Endothelial cell of umbilical vein (primary cell): ENCODE measurements at regions of chr1 and their contacts with region 1.

Region 1: DNA sequence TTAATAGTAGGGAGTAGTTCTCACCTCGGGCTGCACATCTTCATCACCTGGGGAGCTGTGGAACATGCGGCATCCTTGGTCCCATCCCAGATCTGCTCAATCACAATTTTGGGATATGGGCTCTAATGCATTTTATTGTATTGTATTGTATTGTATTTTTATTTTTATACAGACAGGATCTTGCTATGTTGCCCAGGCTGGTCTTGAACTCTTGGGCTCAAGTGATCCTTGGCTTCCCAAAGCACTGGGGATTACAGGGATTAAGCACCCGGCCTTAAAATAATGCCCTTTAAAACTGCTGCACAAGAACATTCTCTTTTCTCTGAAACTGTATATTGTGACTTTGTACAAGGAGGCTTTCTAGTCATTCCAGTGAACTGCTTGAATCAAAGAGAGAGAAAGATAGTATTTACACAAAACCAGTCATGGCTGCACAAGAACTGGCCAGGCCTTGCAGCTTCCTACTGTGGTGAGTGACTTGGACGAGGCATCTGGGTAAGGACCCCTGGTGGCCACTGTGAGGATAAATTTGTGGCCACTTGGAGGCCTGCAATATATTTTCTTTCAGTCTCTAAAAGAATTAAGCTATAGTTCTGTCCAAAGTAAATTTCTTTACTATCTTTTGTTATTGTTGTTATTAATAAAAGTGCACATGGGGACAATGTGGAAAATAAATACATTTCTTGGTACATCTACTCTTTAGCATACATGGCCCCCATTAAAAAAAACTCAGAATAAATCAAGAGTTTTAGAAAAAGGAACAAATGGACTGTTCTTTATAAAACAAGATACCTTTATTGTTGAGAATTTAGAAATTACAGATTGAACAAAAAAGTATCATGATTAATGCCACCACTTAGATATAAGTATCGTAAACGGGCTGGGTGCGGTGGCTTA is 48.0 kb downstream of the TBCE start:
- DNase-seq: peak; percentile 70
- H3K4me3 ChIP-seq: no peak overlapping the region
- H3K27ac ChIP-seq: no peak overlapping the region
- H3K4me1 ChIP-seq: no peaks in the 10 kb centered on the region
- H3K27me3 ChIP-seq: no peaks in the 10 kb centered on the region
- CTCF ChIP-seq: peak; percentile 71 to 80
- POLR2A ChIP-seq: no peak

Region 2: DNA sequence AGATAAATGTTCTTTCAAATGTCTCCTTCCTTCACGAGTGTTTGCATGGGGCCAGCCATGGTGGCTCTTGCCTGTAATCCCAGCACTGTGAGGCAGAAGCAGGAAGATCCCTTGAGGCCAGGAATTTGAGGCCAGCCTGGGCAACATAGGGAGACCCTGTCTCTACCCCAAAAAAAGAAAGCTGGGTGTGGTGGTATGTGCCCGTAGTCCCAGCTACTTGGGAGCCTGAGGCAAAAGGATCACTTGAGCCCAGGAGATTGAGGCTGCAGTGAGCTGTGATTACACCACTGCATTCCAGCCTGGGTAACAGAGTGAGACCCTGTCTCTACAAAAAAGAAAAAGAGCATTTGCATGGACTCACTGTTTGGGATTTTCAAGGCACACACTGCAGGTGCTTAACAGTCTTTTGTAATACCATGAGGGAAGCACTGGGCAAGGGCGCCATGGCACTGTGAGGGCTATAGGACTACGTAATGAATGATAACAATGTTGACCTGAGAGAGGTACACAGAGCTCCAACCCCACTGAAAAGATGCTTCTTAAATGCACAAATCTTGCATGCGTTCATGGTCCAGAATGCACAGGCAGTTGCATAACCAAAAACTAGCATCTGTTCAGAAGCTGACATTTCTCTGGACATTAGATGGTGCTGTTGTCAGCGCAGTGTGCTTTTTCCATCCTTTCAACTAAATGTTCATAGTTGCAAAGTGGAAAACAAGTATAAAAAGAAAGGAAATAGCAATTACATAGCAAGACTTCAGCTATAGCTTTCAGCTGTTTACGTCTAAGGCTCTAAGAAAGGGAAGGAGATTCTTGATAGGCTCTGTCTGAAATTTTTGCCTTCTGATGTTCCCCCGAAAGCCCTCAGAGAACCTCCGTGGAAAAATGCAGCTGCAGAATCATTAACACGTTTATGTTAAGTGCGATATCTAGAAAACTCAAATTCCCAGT is 928.5 kb before region 1 on chr1:
- CTCF ChIA-PET with region 1: interaction called, 42 read pairs
- POLR2A ChIA-PET with region 1: no interaction called
- dilution Hi-C with region 1: no loop called
- intact Hi-C with region 1: loop called (anchors 1 kb)
- DNase-seq: peak; percentile 84
- H3K4me3 ChIP-seq: no peak overlapping the region
- H3K27ac ChIP-seq: no peak overlapping the region
- H3K4me1 ChIP-seq: peaks cover 7% of the 10 kb centered on the region
- H3K27me3 ChIP-seq: peaks cover 10 to 12% of the 10 kb centered on the region in 2 experiments
- CTCF ChIP-seq: peak; percentile 54 to 55
- POLR2A ChIP-seq: no peak

Region 3: DNA sequence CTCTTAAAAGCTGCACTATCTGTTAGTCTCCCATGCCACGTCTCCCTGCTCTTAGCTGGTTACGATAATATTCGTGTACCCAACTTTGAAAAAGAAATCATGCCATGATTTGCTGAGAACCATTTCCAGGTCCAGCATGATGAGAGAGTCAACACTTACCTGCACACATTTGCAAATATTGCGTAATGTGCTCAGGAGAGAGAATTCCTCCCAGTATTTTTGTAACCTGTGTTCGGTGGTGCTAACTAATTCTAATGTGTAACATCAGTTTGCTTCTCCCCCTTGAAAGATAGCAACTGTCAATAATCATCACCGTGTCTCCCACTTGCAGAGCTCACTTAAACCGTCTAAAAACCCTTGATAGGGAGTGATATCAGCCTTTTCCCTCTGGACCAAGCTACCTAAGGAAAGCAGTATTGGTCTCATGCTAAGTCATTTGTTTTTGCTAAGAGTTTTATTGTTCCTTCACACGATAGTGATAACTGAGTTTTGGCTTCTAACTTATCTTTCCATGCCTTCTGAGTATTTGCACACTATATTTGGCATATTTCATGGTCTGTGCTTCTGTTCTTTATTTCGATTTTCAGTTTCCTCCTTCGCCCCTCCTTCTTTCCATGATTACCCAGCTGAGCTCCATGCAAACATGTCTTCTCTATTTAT is 744.2 kb before region 1 on chr1:
- CTCF ChIA-PET with region 1: no interaction called
- POLR2A ChIA-PET with region 1: no interaction called
- dilution Hi-C with region 1: no loop called
- intact Hi-C with region 1: no loop called
- DNase-seq: no peak
- H3K4me3 ChIP-seq: no peak overlapping the region
- H3K27ac ChIP-seq: no peak overlapping the region
- H3K4me1 ChIP-seq: peaks cover 2% of the 10 kb centered on the region
- H3K27me3 ChIP-seq: no peaks in the 10 kb centered on the region
- CTCF ChIP-seq: no peak
- POLR2A ChIP-seq: no peak

Region 4: DNA sequence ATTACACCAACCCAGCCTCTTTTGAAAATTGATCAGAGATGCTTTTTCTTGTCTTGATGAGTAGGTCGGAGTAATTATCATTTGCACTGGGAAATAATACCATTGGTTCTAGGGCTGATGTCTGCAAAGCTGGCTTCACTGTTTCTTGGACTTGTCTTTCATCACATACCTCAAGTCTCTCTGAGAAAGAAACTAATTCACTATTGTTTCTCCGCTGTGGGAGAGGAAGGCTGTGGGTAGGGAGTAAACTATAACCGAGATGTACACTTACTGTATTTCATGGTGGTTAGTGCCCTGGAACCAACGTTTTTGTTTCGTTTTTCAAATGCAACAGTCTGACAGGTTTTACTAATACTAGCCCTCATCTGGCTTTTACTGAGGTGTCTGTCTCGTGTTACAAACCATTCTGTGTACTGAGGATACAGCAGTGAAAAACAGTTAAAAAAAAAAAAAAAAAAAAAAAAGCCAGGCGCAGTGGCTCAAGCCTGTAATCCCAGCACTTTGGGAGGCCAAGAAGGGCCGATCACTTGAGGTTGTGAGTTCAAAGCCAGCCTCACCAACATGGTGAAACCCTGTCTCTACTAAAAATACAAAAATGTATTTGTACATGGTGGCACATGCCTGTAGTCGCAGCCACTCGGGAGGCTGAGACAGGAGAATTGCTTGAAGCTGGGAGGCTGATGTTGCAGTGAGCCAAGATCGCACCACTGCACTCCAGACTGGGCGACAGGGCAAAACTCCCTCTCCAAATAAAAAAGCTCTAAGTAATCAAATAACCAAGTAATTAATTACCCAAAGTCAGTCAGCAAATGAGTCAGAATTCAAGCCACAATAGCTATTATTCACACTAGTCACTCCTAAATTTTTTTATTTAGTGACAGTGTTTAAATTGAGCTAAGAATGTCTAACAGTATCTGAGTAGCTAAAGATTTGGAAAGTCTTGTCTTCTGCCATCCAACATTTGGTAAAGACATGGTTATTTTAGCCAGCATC is 309.9 kb before region 1 on chr1:
- CTCF ChIA-PET with region 1: interaction called, 22 read pairs
- POLR2A ChIA-PET with region 1: no interaction called
- dilution Hi-C with region 1: no loop called
- intact Hi-C with region 1: loop called (anchors 1 kb)
- DNase-seq: peak; percentile 46
- H3K4me3 ChIP-seq: no peak overlapping the region
- H3K27ac ChIP-seq: no peak overlapping the region
- H3K4me1 ChIP-seq: peaks cover 3% of the 10 kb centered on the region
- H3K27me3 ChIP-seq: no peaks in the 10 kb centered on the region
- CTCF ChIP-seq: no peak
- POLR2A ChIP-seq: no peak

Region 5: GRCh38 chr1:235239851-235240250 is 175.4 kb before region 1 on chr1:
- CTCF ChIA-PET with region 1: interaction called, 10 read pairs
- POLR2A ChIA-PET with region 1: no interaction called
- dilution Hi-C with region 1: no loop called
- intact Hi-C with region 1: no loop called
- DNase-seq: no peak
- H3K4me3 ChIP-seq: no peak overlapping the region
- H3K27ac ChIP-seq: no peak overlapping the region
- H3K4me1 ChIP-seq: no peaks in the 10 kb centered on the region
- H3K27me3 ChIP-seq: no peaks in the 10 kb centered on the region
- CTCF ChIP-seq: no peak
- POLR2A ChIP-seq: no peak

Region 6: GRCh38 chr1:235259133-235259778 is 156.0 kb before region 1 on chr1:
- CTCF ChIA-PET with region 1: interaction called, 25 read pairs
- POLR2A ChIA-PET with region 1: no interaction called
- dilution Hi-C with region 1: no loop called
- intact Hi-C with region 1: no loop called
- DNase-seq: no peak
- H3K4me3 ChIP-seq: no peak overlapping the region
- H3K27ac ChIP-seq: no peak overlapping the region
- H3K4me1 ChIP-seq: no peaks in the 10 kb centered on the region
- H3K27me3 ChIP-seq: no peaks in the 10 kb centered on the region
- CTCF ChIP-seq: no peak
- POLR2A ChIP-seq: no peak

Region 7: DNA sequence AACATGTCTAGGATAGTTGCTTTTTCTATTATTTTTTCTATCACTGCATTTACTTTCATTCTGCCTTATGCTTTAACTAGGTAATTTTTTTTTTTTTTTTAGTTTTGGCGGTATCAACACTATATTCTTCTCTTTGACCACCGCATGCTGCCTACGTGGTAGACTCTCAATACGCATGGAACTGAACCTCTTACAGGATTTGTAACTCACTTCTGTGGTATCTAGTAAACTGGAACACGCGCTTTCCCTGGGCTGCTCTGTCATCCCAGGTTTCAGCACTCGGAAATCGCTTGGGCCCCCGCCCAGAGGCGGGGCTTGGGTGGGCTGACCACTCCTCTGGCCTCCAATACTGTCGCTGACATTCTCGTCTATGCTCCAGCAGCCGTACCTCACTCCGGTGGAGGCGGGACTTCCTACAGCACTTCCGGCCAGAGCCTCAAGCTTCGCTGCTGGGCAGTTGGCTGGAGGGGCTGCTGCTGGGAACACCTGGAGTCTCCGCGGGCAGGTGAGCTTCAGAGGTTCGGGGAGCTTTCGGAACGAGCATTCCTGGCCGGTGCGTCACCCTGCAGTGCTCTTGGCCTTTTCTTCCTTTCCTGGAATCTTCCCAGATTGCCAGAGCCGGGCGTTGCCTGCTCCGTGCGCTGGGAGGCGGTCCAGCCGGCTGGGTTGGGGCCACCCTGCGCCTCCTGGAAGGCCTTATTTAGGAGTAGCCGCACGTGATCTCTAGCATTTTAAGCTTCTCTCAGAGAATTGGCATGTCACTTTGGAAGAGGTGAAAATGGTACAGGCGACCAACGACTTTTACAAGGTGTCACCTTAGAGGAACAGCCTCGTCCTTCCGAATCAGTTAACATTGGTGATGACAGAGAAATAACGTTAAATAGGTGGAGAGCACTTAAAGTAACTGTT is 48.0 kb before region 1 on chr1 and contains the start of gene TBCE:
- CTCF ChIA-PET with region 1: interaction called, 13 read pairs
- POLR2A ChIA-PET with region 1: no interaction called
- dilution Hi-C with region 1: no loop called
- intact Hi-C with region 1: loop called (anchors 1 kb)
- DNase-seq: peak; percentile 97
- H3K4me3 ChIP-seq: peak within 1 kb of the TSS; percentile 22 to 84 (median 81)
- H3K27ac ChIP-seq: peak within 1 kb of the TSS; percentile 4
- H3K4me1 ChIP-seq: peaks cover 2% of the 10 kb centered on the region
- H3K27me3 ChIP-seq: no peaks in the 10 kb centered on the region
- CTCF ChIP-seq: peak in 1 of 2 donors; percentile 14
- POLR2A ChIP-seq: peak; percentile 95
- total RNA-seq, gene TBCE: 28.6 and 32.6 TPM in 2 replicates

Region 8: DNA sequence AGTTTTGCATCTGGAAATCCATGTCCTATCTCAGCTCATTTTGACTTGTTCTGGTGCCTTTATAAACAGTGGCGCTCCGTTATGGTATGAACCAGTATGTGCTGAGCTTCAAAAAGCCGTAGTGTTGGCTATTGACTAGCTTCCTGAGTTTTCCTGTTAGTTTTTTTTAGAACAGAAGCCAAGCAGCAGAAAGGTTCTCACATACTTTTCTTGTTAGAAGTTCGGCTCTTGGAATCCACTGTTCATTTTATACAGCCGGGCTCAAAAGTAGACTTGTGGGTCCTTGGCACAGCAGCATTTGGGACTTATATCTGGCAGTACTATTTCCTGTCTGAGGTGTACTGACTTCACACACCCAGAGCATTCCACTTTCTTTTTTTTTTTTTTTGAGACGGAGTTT is 15.7 kb after region 1 on chr1:
- CTCF ChIA-PET with region 1: interaction called, 10 read pairs
- POLR2A ChIA-PET with region 1: no interaction called
- dilution Hi-C with region 1: no loop called
- intact Hi-C with region 1: no loop called
- DNase-seq: peak; percentile 29
- H3K4me3 ChIP-seq: no peak overlapping the region
- H3K27ac ChIP-seq: no peak overlapping the region
- H3K4me1 ChIP-seq: no peaks in the 10 kb centered on the region
- H3K27me3 ChIP-seq: no peaks in the 10 kb centered on the region
- CTCF ChIP-seq: no peak
- POLR2A ChIP-seq: no peak